KBM-7 (cell line): ENCODE measurements at regions of chr18 and their contacts with region 1.

Region 1: GRCh38 chr18:12934454-12935071 is 13.2 kb upstream of the SEH1L start:
- DNase-seq: peak; percentile 84

Region 2: GRCh38 chr18:12737243-12737902 is 197.2 kb before region 1 on chr18:
- in situ Hi-C with region 1: loop called (anchors 10 kb)
- DNase-seq: no peak